Panc1 (cell line): ENCODE measurements at regions of chr21 and their contacts with region 1.

Region 1: GRCh38 chr21:37009740-37010341 is 3.3 kb downstream of the RIPPLY3 start:
- DNase-seq: peak; percentile 71
- ATAC-seq: peak; percentile 98
- H3K4me3 ChIP-seq: peak overlapping the region; percentile 33 to 61
- H3K27ac ChIP-seq: peak overlapping the region; percentile 70; the same call in 1 of the 2 replicates
- H3K4me1 ChIP-seq: no peaks in the 10 kb centered on the region; the same call in 1 of the 2 replicates
- H3K27me3 ChIP-seq: no peaks in the 10 kb centered on the region
- CTCF ChIP-seq: peak; percentile 92

Region 2: GRCh38 chr21:36589355-36589971 is 420.4 kb before region 1 on chr21:
- CTCF ChIA-PET with region 1: no interaction called
- POLR2A ChIA-PET with region 1: no interaction called
- in situ Hi-C with region 1: no loop called
- intact Hi-C with region 1: no loop called
- DNase-seq: no peak
- ATAC-seq: peak; percentile 80
- H3K4me3 ChIP-seq: no peak overlapping the region
- H3K27ac ChIP-seq: no peak overlapping the region
- H3K4me1 ChIP-seq: no peaks in the 10 kb centered on the region
- H3K27me3 ChIP-seq: no peaks in the 10 kb centered on the region; the same call in 1 of the 2 replicates
- CTCF ChIP-seq: peak; percentile 81

Region 3: DNA sequence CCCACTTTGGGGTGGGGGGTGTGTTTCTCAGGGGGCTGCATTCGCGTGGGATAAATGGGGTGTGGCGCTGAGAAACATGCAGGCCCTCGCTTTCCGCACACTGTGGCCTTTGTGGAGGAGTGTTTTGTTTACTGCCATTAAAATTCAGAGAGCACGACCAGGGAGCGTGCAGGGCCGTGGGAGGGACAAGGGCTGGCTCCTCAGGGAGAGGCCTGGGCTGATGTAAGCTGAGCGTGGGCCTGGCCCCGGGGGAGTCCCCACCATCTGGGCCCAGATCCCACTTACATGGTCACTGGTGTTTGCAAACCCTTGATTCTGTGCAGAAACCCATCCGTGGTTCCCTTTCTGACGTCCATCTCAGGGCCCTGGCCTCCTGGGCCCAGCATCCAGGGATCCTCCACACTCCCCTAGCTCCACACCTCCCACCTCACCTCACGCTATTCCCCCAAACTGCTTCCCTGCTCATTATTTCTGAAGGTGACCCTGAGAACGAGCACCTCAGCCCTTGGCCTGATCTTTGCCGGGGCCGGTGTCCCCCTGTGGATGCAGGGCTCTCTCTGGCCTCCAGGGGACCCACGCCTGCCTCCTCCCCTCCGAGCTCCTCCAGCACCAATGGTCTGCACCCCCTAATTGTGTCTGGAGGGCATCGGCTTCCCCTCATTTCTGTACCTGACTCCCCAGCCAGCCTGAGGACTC is 403.4 kb before region 1 on chr21:
- CTCF ChIA-PET with region 1: no interaction called
- POLR2A ChIA-PET with region 1: no interaction called
- in situ Hi-C with region 1: no loop called
- intact Hi-C with region 1: no loop called
- DNase-seq: no peak
- ATAC-seq: no peak
- H3K4me3 ChIP-seq: no peak overlapping the region
- H3K27ac ChIP-seq: no peak overlapping the region
- H3K4me1 ChIP-seq: no peaks in the 10 kb centered on the region
- H3K27me3 ChIP-seq: peaks cover 11% of the 10 kb centered on the region
- CTCF ChIP-seq: no peak

Region 4: DNA sequence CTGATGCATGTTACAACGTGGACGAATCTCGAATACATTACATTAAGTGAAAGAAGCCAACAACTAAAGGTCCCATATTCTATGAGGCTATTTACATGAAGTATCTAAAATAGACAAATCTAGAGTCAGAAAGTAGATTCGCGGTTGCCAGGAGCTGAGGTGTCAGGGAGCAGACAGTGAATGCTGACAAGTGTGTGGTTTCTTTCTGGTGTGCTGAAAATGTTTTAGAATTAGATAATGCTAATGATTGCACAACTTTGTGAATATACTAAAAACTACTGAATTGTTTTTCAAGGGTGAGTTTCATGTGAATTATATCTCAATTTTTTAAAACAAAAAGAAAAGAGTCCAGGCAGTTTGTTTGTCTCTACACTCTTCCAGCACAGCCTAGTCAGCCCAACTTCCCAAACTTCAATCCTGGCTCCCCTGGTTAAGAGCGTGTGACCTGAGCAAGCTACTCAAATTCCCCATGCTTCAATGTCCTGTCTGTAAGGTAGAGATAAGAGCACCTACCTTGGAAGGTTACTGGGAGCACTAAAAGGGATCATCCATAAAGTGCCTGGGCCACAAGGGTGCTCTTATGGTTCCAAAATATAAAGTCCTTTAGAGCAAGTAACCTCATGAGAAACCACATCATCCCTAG is 64.2 kb before region 1 on chr21:
- CTCF ChIA-PET with region 1: no interaction called
- POLR2A ChIA-PET with region 1: no interaction called
- in situ Hi-C with region 1: no loop called
- intact Hi-C with region 1: no loop called
- DNase-seq: no peak
- ATAC-seq: no peak
- H3K4me3 ChIP-seq: no peak overlapping the region
- H3K27ac ChIP-seq: no peak overlapping the region
- H3K4me1 ChIP-seq: no peaks in the 10 kb centered on the region
- H3K27me3 ChIP-seq: no peaks in the 10 kb centered on the region
- CTCF ChIP-seq: no peak

Region 5: DNA sequence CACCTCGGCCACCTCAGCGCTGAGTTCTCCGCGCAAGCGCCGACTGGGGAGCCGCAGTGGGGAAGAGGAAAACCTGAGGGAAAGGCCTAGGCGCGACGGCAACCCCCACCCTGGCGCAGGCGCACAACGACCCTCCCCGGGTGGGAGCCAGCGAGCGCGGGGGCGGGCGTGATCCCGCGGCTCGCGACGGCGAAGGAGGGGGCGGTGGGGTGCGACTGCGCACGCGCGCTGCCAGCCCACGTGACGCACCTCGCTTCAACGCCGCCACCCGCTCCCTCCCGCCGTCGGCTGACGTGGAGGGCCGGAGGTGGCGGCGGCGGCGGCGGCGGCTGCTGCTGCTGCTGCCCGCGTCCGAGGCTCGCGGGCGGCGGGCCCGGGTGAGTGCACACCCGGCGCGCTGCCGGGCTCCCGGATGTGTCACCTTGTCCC is 63.2 kb after region 1 on chr21 and contains the starts of genes PIGP and TTC3:
- CTCF ChIA-PET with region 1: no interaction called
- POLR2A ChIA-PET with region 1: no interaction called
- in situ Hi-C with region 1: no loop called
- intact Hi-C with region 1: loop called (anchors 10 kb)
- DNase-seq: no peak
- ATAC-seq: peak; percentile 86
- H3K4me3 ChIP-seq: peak within 1 kb of the TSS; percentile 82 to 89
- H3K27ac ChIP-seq: peak within 1 kb of the TSS; percentile 97
- H3K4me1 ChIP-seq: peaks cover 12% of the 10 kb centered on the region; the same call in 1 of the 2 replicates
- H3K27me3 ChIP-seq: no peaks in the 10 kb centered on the region
- CTCF ChIP-seq: no peak
- total RNA-seq, gene PIGP: 16.1 TPM
- total RNA-seq, gene TTC3: 83.0 TPM